ENCODE measurements at regions of chr2 and their contacts with region 1.

Region 1: DNA sequence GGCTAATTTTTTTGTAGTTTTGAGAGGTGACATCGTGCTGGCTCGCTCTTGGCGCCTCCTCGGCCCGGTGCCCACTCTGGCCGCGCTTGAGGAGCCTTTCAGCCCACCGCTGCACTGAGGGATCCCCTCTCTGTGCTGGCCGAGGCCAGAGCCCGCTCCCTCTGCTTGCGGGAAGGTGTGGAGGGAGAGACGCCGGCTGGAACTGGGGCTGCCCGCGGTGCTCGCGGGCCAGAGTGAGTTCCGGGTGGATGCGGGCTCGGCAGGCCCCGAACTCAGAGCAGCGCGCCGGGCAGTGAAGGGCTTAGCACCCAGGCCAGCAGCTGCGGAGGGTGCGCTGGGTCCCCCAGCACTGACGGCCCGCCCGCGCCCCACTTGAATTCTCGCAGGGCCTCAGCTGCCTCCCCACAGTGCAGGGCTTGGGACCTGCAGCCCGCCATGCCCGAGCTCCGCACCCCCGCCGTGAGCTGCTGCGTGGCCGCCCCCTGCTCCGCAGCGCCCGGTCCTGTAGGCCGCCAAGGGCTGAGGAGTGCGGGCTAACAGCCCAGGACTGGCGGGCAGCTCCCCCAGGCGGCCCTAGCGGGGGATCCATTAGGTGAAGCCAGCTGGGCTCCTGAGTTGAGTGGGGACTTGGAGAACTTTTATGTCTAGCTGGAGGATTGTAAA is 113.2 kb upstream of the ZSWIM2 start:
- DNase-seq: no peak
- ATAC-seq: no peak
- H3K4me3 ChIP-seq: no peak overlapping the region
- H3K27ac ChIP-seq: no peak overlapping the region
- H3K4me1 ChIP-seq: no peaks in the 10 kb centered on the region
- H3K27me3 ChIP-seq: no peaks in the 10 kb centered on the region
- CTCF ChIP-seq: no peak
- POLR2A ChIP-seq: no peak
- RAD21 ChIP-seq: no peak

Region 2: DNA sequence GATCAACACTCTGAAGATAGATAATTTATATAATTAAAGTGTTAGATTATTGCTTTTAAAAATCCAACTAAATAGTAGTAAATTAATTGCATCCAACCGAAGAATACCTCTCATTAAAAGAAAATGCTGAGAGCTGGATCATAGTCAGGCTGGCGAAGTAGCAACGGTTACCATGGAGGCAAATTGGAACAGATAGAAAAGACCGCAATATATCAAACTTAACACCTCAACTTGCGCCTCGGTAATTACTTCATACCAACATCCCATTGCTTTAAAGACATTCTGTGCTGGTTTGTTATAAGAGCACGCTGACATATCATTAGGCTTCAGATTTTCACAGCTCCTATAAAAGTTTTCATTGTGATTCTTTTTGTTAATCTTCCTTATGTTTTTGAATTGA is 660.0 kb before region 1 on chr2:
- CTCF ChIA-PET with region 1: no interaction called
- POLR2A ChIA-PET with region 1: no interaction called
- dilution Hi-C with region 1: no loop called
- in situ Hi-C with region 1: no loop called
- intact Hi-C with region 1: no loop called
- DNase-seq: no peak
- ATAC-seq: no peak
- H3K4me3 ChIP-seq: no peak overlapping the region
- H3K27ac ChIP-seq: no peak overlapping the region
- H3K4me1 ChIP-seq: no peaks in the 10 kb centered on the region
- H3K27me3 ChIP-seq: no peaks in the 10 kb centered on the region
- CTCF ChIP-seq: no peak
- POLR2A ChIP-seq: no peak
- RAD21 ChIP-seq: no peak

Region 3: DNA sequence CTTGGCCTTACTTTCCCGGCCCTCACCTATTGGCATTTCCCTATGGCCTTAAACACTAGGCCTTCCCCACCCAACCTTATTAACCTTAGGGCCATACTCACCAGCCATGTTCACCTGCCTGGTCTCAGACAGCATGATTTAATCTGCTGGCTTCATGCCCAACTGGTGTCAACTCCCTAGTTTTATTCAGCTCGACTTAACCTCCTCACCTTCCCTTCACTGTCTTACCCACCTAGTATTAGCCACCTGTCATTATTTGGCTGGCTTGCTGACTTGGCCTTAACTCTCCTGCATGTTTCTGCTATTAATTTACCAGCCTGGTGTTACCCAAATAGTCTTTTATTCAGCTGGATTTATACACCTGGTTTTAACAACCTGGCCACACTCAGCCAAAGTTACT is 22.8 kb after region 1 on chr2:
- CTCF ChIA-PET with region 1: no interaction called
- POLR2A ChIA-PET with region 1: no interaction called
- dilution Hi-C with region 1: no loop called
- in situ Hi-C with region 1: no loop called
- intact Hi-C with region 1: loop called (anchors 1 kb)
- DNase-seq: no peak
- ATAC-seq: no peak
- H3K4me3 ChIP-seq: no peak overlapping the region
- H3K27ac ChIP-seq: no peak overlapping the region
- H3K4me1 ChIP-seq: no peaks in the 10 kb centered on the region
- H3K27me3 ChIP-seq: no peaks in the 10 kb centered on the region
- CTCF ChIP-seq: no peak
- POLR2A ChIP-seq: no peak
- RAD21 ChIP-seq: no peak